CD14-positive monocyte (primary cell): ENCODE measurements at regions of chr2 and their contacts with region 1.

Region 1: GRCh38 chr2:10668402-10669012 is 21.3 kb downstream of the NOL10 start:
- DNase-seq: peak; percentile 30 to 59 (median 44)
- H3K4me3 ChIP-seq: no peak overlapping the region
- H3K4me3 Mint-ChIP-seq: no peak overlapping the region
- H3K27ac ChIP-seq: no peak overlapping the region
- H3K27ac Mint-ChIP-seq: no peak overlapping the region
- H3K4me1 ChIP-seq: no peaks in the 10 kb centered on the region
- H3K4me1 Mint-ChIP-seq: no peaks in the 10 kb centered on the region
- H3K27me3 ChIP-seq: no peaks in the 10 kb centered on the region
- H3K27me3 Mint-ChIP-seq: peaks cover 0 to 3% (median 0%) of the 10 kb centered on the region in 3 donors
- CTCF ChIP-seq: peak; percentile 87

Region 2: DNA sequence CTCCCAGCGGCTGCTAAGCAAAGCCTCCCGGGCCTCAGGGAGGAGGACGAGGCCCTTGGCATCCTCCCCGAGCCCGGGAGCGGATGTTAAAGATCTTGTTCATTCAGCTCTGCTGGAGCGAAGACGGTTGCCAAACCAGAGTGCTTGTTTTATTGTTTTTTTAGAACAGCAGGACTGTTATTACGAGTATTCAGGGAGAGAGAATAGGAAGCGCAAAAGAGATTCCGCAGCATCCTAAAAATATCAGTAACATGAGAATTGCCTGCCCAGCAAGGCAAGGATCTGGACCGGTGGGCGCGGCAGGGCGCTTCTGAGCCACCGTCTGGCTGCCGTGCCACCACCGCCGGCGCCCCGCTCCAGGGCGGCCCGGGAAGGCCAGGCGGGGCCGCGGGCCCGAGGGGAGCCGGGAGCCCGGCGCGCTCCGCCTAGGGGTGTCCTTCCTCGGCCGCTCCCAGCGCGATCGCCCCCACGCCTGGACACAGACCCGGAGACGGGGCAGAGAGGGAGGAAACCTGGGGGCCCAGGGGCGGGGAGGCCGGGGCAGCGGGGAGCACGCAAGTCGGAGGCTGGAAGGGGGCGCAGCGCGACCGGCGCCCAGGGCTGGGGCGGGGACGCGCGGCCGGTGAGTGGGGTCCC is 589.2 kb before region 1 on chr2:
- intact Hi-C with region 1: loop called (anchors 5 kb)
- DNase-seq: no peak
- H3K4me3 ChIP-seq: peak overlapping the region in 1 of 3 experiments; percentile 54
- H3K4me3 Mint-ChIP-seq: peak overlapping the region; percentile 29 to 86
- H3K27ac ChIP-seq: no peak overlapping the region
- H3K27ac Mint-ChIP-seq: no peak overlapping the region
- H3K4me1 ChIP-seq: peaks cover 8 to 17% of the 10 kb centered on the region in 2 donors
- H3K4me1 Mint-ChIP-seq: peaks cover 12% of the 10 kb centered on the region
- H3K27me3 ChIP-seq: peaks cover 74 to 92% of the 10 kb centered on the region in 2 donors
- H3K27me3 Mint-ChIP-seq: peaks cover 85 to 92% (median 87%) of the 10 kb centered on the region in 3 donors
- CTCF ChIP-seq: no peak

Region 3: DNA sequence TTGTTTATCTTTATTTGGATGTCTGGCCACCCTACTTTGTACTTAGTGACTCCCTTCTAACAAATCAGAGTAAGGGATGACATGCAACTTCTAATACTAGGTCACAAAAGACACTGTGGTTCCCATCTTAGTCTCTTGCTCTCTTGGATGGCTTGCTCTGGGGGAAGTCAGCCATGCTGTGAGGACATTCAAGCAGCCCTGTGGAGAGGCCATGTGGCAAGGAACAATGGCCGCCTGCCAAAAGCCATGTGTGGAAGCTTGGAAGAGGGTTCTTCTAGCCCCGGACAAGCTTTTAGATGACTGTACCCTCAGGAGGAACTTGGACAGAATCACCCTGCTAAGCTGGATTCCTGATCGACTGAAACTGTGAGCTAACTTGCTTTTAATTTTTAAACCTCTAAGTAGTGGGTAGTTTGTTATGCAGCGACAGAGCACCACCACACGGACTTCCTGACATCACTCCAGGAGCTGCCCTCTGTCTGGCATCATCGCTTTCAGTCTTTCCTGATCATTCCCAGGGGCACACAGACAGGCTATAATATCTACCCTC is 103.6 kb before region 1 on chr2:
- intact Hi-C with region 1: no loop called
- DNase-seq: no peak
- H3K4me3 ChIP-seq: no peak overlapping the region
- H3K4me3 Mint-ChIP-seq: no peak overlapping the region
- H3K27ac ChIP-seq: no peak overlapping the region
- H3K27ac Mint-ChIP-seq: no peak overlapping the region
- H3K4me1 ChIP-seq: no peaks in the 10 kb centered on the region
- H3K4me1 Mint-ChIP-seq: no peaks in the 10 kb centered on the region
- H3K27me3 ChIP-seq: no peaks in the 10 kb centered on the region
- H3K27me3 Mint-ChIP-seq: no peaks in the 10 kb centered on the region
- CTCF ChIP-seq: no peak

Region 4: DNA sequence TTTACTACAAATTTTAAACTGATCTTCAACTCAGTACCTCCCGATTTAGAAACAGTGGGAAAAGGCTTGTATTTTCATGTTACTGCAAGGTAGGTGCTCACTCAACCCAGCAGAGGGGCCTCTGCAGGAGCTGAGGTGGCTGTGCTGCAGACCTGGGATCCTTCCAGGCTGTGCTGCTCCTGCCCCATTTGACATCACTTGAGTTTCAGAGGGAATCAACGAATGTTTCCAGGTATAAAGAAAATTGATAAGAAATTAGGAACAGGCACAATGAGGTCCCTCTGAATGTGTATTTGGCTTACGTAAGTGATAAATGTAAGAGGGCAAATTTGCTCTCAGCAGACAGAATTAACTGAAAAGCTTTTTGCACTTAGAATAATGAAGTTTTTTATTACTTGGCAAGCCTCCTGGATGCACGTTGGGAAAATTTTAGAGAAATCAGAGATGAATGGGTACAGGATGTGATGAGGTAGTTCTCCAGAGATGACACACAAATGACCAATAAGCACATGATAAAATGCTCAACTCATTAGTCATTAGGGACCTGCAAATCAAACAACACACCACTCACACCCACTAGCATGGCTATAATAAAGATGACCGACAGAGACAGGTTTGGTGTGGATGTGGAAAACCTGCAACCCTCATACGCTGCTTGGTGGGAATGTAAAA is 92.8 kb before region 1 on chr2:
- intact Hi-C with region 1: no loop called
- DNase-seq: no peak
- H3K4me3 ChIP-seq: no peak overlapping the region
- H3K4me3 Mint-ChIP-seq: no peak overlapping the region
- H3K27ac ChIP-seq: no peak overlapping the region
- H3K27ac Mint-ChIP-seq: no peak overlapping the region
- H3K4me1 ChIP-seq: no peaks in the 10 kb centered on the region
- H3K4me1 Mint-ChIP-seq: no peaks in the 10 kb centered on the region
- H3K27me3 ChIP-seq: no peaks in the 10 kb centered on the region
- H3K27me3 Mint-ChIP-seq: peaks cover 0 to 2% (median 0%) of the 10 kb centered on the region in 3 donors
- CTCF ChIP-seq: no peak